ENCODE measurements at regions of chr5 and their contacts with region 1.

Region 1: GRCh38 chr5:81469676-81470075 is 75.7 kb upstream of the ACOT12 start:
- DNase-seq: no peak
- H3K4me3 ChIP-seq: no peak overlapping the region
- H3K27ac ChIP-seq: no peak overlapping the region
- H3K4me1 ChIP-seq: no peaks in the 10 kb centered on the region
- CTCF ChIP-seq: no peak

Region 2: DNA sequence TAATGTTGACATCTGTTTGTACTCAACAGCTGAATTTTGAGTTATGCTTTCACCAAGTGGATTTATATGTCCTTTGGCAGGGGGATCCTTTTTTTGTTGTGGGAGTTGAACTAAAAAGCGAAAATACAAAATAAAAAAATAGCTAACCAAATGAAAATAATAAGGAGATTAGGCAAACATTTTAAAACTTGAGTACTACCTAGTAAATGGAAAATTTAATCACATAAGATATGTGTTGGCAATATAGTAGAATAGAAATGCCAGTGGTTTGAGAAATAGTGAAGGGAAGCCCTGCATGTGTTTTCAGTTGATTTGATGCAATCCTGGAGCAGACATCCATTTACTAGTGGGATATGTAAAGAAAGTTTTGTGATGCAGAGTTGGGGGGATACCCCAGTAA is 411.6 kb before region 1 on chr5:
- CTCF ChIA-PET with region 1: no interaction called
- POLR2A ChIA-PET with region 1: no interaction called
- intact Hi-C with region 1: no loop called
- DNase-seq: no peak
- H3K4me3 ChIP-seq: no peak overlapping the region
- H3K27ac ChIP-seq: no peak overlapping the region
- H3K4me1 ChIP-seq: no peaks in the 10 kb centered on the region
- CTCF ChIP-seq: no peak

Region 3: DNA sequence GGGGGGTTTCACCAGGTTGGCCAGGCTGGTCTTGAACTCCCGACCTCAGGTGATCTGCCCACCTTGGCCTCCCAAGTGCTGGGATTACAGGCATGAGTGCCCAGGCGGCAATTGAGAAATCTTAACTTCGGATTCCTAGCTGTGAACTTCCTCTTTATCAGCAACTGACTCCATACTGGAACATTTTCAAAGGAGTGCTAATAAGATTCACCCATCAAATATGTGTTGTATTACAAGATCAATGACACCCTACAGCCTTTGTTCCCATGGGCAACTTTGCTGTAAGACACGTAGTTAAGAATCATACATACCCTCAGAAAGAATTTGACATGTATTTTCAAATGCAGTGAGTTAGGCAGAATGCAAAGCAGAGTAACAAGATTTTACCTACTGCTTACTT is 52.6 kb before region 1 on chr5:
- CTCF ChIA-PET with region 1: no interaction called
- POLR2A ChIA-PET with region 1: no interaction called
- intact Hi-C with region 1: no loop called
- DNase-seq: no peak
- H3K4me3 ChIP-seq: no peak overlapping the region
- H3K27ac ChIP-seq: no peak overlapping the region
- H3K4me1 ChIP-seq: no peaks in the 10 kb centered on the region
- CTCF ChIP-seq: no peak

Region 4: DNA sequence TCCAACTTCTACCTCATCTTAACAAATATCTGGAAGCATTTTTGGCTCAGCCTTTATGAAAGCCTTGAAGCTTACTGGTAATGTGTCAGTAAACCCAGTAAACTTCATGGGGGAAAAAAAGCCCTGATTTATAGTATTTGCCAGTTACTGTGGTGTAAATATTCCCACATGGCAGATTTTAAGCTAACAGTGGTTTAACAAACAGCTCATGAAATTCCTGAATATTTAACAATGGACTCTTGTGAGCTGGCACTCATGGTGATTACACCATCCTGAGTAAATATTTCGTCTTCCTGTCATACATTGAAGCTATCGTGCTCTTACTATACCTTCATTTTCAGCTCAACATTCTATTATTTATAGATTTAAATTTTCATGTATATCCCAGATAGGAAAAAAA is 18.7 kb before region 1 on chr5:
- CTCF ChIA-PET with region 1: no interaction called
- POLR2A ChIA-PET with region 1: interaction called, 10 read pairs
- intact Hi-C with region 1: loop called (anchors 2 kb)
- DNase-seq: no peak
- H3K4me3 ChIP-seq: no peak overlapping the region
- H3K27ac ChIP-seq: no peak overlapping the region
- H3K4me1 ChIP-seq: no peaks in the 10 kb centered on the region
- CTCF ChIP-seq: no peak

Region 5: GRCh38 chr5:81517462-81517861 is 47.8 kb after region 1 on chr5:
- CTCF ChIA-PET with region 1: no interaction called
- POLR2A ChIA-PET with region 1: no interaction called
- intact Hi-C with region 1: no loop called
- DNase-seq: no peak
- H3K4me3 ChIP-seq: no peak overlapping the region
- H3K27ac ChIP-seq: no peak overlapping the region
- H3K4me1 ChIP-seq: peaks cover 58% of the 10 kb centered on the region
- CTCF ChIP-seq: no peak

Region 6: DNA sequence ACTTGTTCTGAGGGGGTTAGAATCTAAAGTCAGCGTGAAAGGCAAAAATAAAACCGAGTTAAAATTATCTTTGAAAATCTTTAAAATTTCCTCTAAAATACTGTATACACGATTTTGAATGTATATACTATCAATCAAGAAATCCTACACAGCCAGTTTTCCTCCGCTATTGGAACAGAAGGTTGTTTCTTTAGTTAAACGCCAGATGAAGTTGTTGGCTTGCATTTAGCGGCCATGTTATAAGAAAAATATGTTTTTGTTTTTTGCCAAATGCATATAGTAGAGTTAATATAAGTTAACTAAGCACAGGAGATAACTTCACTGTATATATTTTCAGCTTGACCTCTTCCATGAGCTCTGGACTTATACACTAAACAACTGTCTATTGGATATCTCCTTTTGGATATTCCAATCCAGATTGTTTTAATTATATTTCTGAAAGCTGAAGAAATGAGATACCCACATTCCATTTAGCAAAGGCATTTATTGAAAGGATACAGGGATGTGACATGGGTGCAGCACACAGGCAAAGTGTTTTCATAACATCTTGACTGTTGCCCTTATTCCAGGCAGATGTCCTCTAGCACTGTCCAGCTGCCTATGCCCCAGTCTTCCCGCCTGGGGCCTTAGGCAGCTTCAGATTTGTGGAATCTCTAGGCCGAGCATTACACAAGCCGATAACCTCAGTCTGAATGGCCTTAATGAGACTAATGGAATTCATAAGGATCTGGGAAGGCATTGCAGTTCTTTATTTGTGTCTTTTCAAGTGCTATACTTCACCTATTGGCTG is 492.2 kb after region 1 on chr5:
- CTCF ChIA-PET with region 1: no interaction called
- POLR2A ChIA-PET with region 1: no interaction called
- intact Hi-C with region 1: no loop called
- DNase-seq: no peak
- H3K4me3 ChIP-seq: no peak overlapping the region
- H3K27ac ChIP-seq: no peak overlapping the region
- H3K4me1 ChIP-seq: no peaks in the 10 kb centered on the region
- CTCF ChIP-seq: no peak

Measured in OCI-LY7 (cell line).